Dendritic cell treated with granulocyte-macrophage colony-stimulating factor and Interleukin-4, amounts not matched to agents 40 ng/mL and 50 ng/mL, for 4 days (primary cell): ENCODE measurements at regions of chr15 and their contacts with region 1.

Region 1: GRCh38 chr15:79896637-79897379 is at the start of gene MTHFS:
- H3K4me3 Mint-ChIP-seq: peak within 1 kb of the TSS; percentile 92
- H3K27ac Mint-ChIP-seq: peak within 1 kb of the TSS; percentile 80
- H3K4me1 Mint-ChIP-seq: peaks cover 34% of the 10 kb centered on the region
- H3K27me3 Mint-ChIP-seq: peaks cover 22% of the 10 kb centered on the region

Region 2: GRCh38 chr15:79844221-79844620 is 52.6 kb before region 1 on chr15:
- intact Hi-C with region 1: no loop called
- H3K4me3 Mint-ChIP-seq: no peak overlapping the region
- H3K27ac Mint-ChIP-seq: no peak overlapping the region
- H3K4me1 Mint-ChIP-seq: no peaks in the 10 kb centered on the region
- H3K27me3 Mint-ChIP-seq: no peaks in the 10 kb centered on the region

Region 3: GRCh38 chr15:79923515-79924395 is 26.9 kb after region 1 on chr15:
- intact Hi-C with region 1: loop called (anchors 1 kb)
- H3K4me3 Mint-ChIP-seq: peak overlapping the region; percentile 92
- H3K27ac Mint-ChIP-seq: peak overlapping the region; percentile 92
- H3K4me1 Mint-ChIP-seq: peaks cover 8% of the 10 kb centered on the region
- H3K27me3 Mint-ChIP-seq: peaks cover 32% of the 10 kb centered on the region

Region 4: DNA sequence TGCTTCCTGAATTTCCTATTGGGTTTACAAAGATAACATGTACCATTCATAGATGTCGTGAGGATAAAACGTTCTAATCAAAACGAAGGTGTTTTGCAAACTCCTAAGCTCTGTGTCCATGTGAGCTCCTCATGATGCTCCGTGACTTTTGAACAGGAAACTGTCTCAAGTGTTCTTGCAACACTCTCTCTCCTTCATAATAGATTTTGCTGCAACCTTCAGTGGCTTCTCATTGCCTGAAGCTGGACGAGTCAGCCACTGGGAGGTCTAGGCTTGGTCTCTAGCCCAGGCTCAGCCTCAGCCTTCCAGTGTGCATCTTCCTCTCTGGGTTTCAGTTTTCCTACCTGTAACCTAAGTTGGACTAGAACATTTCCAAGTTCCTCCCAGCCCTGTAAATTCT is 92.9 kb after region 1 on chr15:
- intact Hi-C with region 1: loop called (anchors 1 kb)
- H3K4me3 Mint-ChIP-seq: no peak overlapping the region
- H3K27ac Mint-ChIP-seq: no peak overlapping the region
- H3K4me1 Mint-ChIP-seq: peaks cover 31% of the 10 kb centered on the region
- H3K27me3 Mint-ChIP-seq: peaks cover 67% of the 10 kb centered on the region

Region 5: DNA sequence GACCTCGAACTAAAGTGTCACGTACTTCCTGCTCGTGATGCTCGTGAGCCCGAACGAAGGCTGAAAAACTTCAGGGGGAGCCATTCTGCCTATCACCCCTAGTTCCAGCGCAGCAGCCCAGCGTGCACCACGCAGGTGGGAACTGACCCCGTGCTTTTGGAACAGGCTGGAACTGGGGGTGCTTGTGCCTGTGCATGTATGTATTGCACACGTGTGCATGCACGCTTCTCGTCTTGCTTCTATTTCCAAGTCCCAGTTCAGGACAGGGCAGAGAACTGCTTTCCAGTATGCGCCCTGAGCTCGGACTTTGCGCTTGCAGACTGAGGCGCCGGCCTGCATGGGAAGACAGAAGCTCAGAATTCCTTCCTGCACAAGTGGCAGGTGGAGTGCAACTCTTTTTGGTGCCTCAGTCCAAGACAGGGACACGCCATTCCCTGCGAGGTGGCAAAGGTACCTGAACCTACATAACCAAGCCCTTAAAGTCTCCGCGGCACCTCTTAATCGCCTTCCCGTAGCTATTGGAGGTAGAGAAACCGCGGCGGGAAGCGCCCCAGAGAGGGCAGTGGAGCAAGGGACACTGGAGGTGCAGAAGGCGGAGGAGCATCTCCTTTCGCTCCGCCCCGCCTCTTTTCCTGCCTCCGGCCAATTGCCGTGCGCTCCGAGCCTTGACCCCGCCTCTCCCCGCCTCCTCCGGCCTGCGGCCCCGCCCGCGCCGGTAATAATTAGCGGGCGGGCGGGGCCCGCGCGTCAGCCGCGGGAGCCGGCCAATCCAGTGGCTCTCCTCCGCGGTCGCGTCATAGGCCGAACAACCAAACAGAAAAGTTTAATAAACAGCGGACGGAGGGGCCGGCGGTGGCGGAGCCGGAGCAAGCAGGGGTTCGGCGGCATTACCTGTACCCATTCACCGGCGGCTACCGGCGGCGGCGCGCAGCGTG is 162.3 kb after region 1 on chr15 and contains the start of gene ZFAND6:
- intact Hi-C with region 1: loop called (anchors 10 kb)
- H3K4me3 Mint-ChIP-seq: peak within 1 kb of the TSS; percentile 86
- H3K27ac Mint-ChIP-seq: peak within 1 kb of the TSS; percentile 91
- H3K4me1 Mint-ChIP-seq: peaks cover 22% of the 10 kb centered on the region
- H3K27me3 Mint-ChIP-seq: peaks cover 7% of the 10 kb centered on the region